ENCODE measurements at regions of chr17 and their contacts with region 1.

Region 1: GRCh38 chr17:39376434-39376833 is 25.0 kb downstream of the FBXL20 start:
- DNase-seq: no peak
- H3K4me3 Mint-ChIP-seq: no peak overlapping the region
- H3K27ac Mint-ChIP-seq: no peak overlapping the region
- H3K4me1 Mint-ChIP-seq: peaks cover 23% of the 10 kb centered on the region
- H3K27me3 Mint-ChIP-seq: no peaks in the 10 kb centered on the region
- CTCF ChIP-seq: no peak

Region 2: GRCh38 chr17:39235555-39236449 is 140.6 kb before region 1 on chr17:
- CTCF ChIA-PET with region 1: no interaction called
- intact Hi-C with region 1: no loop called
- DNase-seq: peak; percentile 88
- H3K4me3 Mint-ChIP-seq: no peak overlapping the region
- H3K27ac Mint-ChIP-seq: no peak overlapping the region
- H3K4me1 Mint-ChIP-seq: peaks cover 49% of the 10 kb centered on the region
- H3K27me3 Mint-ChIP-seq: peaks cover 28% of the 10 kb centered on the region
- CTCF ChIP-seq: peak; percentile 100

Region 3: GRCh38 chr17:39294060-39294459 is 82.4 kb before region 1 on chr17:
- CTCF ChIA-PET with region 1: interaction called, 11 read pairs
- intact Hi-C with region 1: no loop called
- DNase-seq: no peak
- H3K4me3 Mint-ChIP-seq: no peak overlapping the region
- H3K27ac Mint-ChIP-seq: no peak overlapping the region
- H3K4me1 Mint-ChIP-seq: no peaks in the 10 kb centered on the region
- H3K27me3 Mint-ChIP-seq: no peaks in the 10 kb centered on the region
- CTCF ChIP-seq: no peak

Region 4: DNA sequence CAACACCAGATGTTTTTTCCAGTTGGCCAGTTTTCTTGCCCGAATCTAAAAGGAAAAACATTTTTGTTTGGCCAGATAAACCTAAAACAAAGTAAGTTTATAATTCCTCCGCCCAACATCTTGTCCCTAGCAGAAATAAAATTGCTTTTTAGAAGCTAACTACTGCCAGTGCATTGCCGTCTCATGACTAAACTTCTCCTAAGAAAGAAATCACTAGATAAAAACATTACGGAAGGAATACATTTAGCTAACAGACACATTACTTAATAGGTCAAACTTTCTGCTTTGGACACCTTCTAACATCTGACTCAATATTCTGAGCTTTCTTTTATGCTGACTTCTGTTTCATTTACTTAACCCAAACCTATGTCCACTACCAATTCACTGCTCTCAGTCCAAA is 11.2 kb before region 1 on chr17:
- CTCF ChIA-PET with region 1: interaction called, 25 read pairs
- intact Hi-C with region 1: no loop called
- DNase-seq: no peak
- H3K4me3 Mint-ChIP-seq: no peak overlapping the region
- H3K27ac Mint-ChIP-seq: no peak overlapping the region
- H3K4me1 Mint-ChIP-seq: no peaks in the 10 kb centered on the region
- H3K27me3 Mint-ChIP-seq: no peaks in the 10 kb centered on the region
- CTCF ChIP-seq: no peak